PC-3 (cell line): ENCODE measurements at regions of chr4 and their contacts with region 1.

Region 1: GRCh38 chr4:26410385-26411293 is 79.6 kb downstream of the CCKAR start:
- DNase-seq: peak; percentile 76
- ATAC-seq: peak; percentile 62
- H3K4me3 ChIP-seq: no peak overlapping the region
- H3K27ac ChIP-seq: no peak overlapping the region
- H3K4me1 ChIP-seq: no peaks in the 10 kb centered on the region
- H3K27me3 ChIP-seq: no peaks in the 10 kb centered on the region
- CTCF ChIP-seq: peak; percentile 74

Region 2: DNA sequence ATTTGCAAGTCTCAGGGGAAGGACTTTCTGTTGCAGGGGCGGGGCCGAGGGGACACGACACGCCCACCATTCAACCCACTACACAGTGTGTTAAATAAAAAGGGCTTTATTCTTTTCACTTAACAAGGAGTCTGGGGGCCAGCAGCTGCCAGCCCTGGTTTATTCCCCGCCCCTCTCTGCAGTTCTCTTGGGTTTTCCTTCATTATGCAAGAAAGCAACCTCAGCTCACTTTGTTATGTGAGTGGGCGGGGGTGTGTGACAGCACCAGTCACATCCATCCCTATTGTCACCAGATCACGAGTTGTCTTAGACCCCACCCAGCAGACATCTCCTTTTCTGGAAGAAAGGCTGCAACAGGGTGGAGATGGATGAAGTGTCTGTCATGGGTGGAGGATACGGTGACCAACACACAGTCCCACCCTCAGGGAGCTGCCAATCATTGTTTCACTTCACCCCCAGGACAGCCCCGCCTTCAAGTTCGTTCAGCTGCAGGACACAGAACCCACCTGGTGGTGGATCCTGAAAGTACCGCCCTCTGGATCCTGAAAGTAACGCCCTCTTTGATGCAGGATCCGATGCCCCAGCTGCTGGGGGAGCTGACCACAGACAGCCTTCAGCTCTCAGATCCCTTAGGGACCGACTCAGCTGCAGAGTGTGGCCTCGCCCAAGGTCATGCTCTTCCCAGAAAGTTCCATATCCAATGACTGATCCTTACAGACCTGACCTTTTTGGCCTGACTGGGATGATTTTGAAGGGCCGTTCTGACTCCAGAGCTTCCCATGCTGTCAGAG is 417.0 kb before region 1 on chr4:
- CTCF ChIA-PET with region 1: no interaction called
- POLR2A ChIA-PET with region 1: no interaction called
- intact Hi-C with region 1: loop called (anchors 2 kb)
- DNase-seq: peak; percentile 13
- ATAC-seq: no peak
- H3K4me3 ChIP-seq: no peak overlapping the region
- H3K27ac ChIP-seq: no peak overlapping the region
- H3K4me1 ChIP-seq: no peaks in the 10 kb centered on the region
- H3K27me3 ChIP-seq: no peaks in the 10 kb centered on the region
- CTCF ChIP-seq: peak; percentile 42; the same call in 1 of the 2 replicates

Region 3: DNA sequence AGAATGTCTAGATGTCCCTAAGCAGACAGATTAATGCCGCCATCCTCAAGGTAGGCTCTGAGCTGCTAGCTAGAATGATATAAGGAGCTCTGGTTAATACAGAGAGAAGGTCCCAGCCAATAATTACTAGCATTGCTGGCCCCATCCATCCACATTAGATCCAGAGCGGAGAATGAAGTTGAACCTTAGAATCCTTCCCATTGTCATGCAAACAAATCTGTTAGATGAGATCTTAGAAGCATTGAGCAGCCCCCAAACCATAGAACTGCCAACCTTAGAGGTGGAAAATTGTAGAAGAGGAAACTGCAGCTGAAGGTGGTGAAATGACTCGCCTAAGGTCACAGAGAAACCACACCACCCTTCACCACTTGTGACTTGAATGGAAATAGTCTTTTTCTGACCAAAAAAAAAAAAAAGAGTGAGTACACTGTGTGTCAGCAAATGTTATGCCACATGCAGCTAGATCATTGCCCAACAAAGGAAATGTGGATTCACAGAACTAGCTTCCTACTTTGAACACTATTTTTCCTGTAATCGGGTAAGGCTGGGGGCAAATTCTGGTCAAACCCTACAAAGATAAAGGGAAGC is 334.5 kb before region 1 on chr4:
- CTCF ChIA-PET with region 1: no interaction called
- POLR2A ChIA-PET with region 1: no interaction called
- intact Hi-C with region 1: loop called (anchors 5 kb)
- DNase-seq: peak; percentile 68
- ATAC-seq: peak; percentile 49
- H3K4me3 ChIP-seq: peak overlapping the region; percentile 35; the same call in 1 of the 2 replicates
- H3K27ac ChIP-seq: peak overlapping the region; percentile 86
- H3K4me1 ChIP-seq: peaks cover 34% of the 10 kb centered on the region
- H3K27me3 ChIP-seq: no peaks in the 10 kb centered on the region
- CTCF ChIP-seq: no peak

Region 4: DNA sequence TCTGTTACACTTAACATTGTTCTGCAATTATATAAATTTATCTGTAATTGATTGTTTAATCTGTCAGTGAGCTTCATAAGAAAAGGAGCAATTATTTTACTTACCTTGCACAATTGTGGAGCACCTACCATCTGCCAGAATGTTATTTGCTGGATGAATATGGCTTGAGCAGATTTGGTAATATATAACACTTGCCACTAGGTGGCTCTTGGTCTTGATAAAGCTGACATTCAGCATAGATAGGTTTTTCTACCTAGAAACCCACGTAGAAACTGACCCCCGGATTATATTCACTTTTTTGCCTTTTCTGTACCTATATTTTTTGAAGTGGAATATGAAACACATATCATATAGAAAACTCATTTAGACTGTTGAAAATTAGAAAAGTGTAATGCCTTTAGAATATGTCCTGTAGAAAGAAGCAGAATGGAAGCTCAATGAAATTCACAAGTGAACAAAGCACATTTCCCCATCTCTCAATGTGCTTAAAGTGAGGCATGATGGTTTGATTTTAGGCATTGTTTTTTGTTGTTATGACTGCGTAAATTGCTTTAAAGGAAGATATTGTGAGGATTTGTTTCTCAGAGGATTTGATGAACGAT is 80.4 kb before region 1 on chr4:
- CTCF ChIA-PET with region 1: interaction called, 8 read pairs
- POLR2A ChIA-PET with region 1: no interaction called
- intact Hi-C with region 1: loop called (anchors 1 kb)
- DNase-seq: peak; percentile 75
- ATAC-seq: peak; percentile 79
- H3K4me3 ChIP-seq: no peak overlapping the region
- H3K27ac ChIP-seq: no peak overlapping the region
- H3K4me1 ChIP-seq: peaks cover 17% of the 10 kb centered on the region
- H3K27me3 ChIP-seq: no peaks in the 10 kb centered on the region
- CTCF ChIP-seq: peak; percentile 75

Region 5: GRCh38 chr4:27027428-27027827 is 616.8 kb after region 1 on chr4:
- CTCF ChIA-PET with region 1: no interaction called
- POLR2A ChIA-PET with region 1: no interaction called
- intact Hi-C with region 1: no loop called
- DNase-seq: no peak
- ATAC-seq: no peak
- H3K4me3 ChIP-seq: no peak overlapping the region
- H3K27ac ChIP-seq: no peak overlapping the region
- H3K4me1 ChIP-seq: no peaks in the 10 kb centered on the region
- H3K27me3 ChIP-seq: no peaks in the 10 kb centered on the region
- CTCF ChIP-seq: no peak